ENCODE measurements at regions of chr3 and their contacts with region 1.

Region 1: GRCh38 chr3:194757647-194758061 is 72.0 kb downstream of the FAM43A start:
- DNase-seq: peak in 1 of 2 donors; percentile 62
- H3K4me3 ChIP-seq: no peak overlapping the region
- H3K27ac ChIP-seq: peak overlapping the region in 1 of 5 donors; percentile 68
- H3K4me1 ChIP-seq: peaks cover 6 to 24% (median 6%) of the 10 kb centered on the region in 4 donors
- H3K27me3 ChIP-seq: peaks cover 0 to 13% (median 0%) of the 10 kb centered on the region in 3 donors
- CTCF ChIP-seq: no peak
- EP300 ChIP-seq: no peak
- POLR2A ChIP-seq: no peak

Region 2: GRCh38 chr3:194691481-194692283 is 66.0 kb before region 1 on chr3:
- intact Hi-C with region 1: loop called (anchors 10 kb)
- DNase-seq: peak; percentile 14 to 41
- H3K4me3 ChIP-seq: no peak overlapping the region
- H3K27ac ChIP-seq: peak overlapping the region in 1 of 5 donors; percentile 34
- H3K4me1 ChIP-seq: peaks cover 23 to 38% (median 28%) of the 10 kb centered on the region in 4 donors
- H3K27me3 ChIP-seq: peaks cover 0 to 15% (median 7%) of the 10 kb centered on the region in 3 donors
- CTCF ChIP-seq: no peak
- EP300 ChIP-seq: no peak
- POLR2A ChIP-seq: no peak

Region 3: GRCh38 chr3:195001961-195002861 is 244.6 kb after region 1 on chr3:
- intact Hi-C with region 1: no loop called
- DNase-seq: peak; percentile 78 to 89
- H3K4me3 ChIP-seq: no peak overlapping the region
- H3K27ac ChIP-seq: no peak overlapping the region
- H3K4me1 ChIP-seq: peaks cover 9 to 22% (median 15%) of the 10 kb centered on the region in 4 donors
- H3K27me3 ChIP-seq: no peaks in the 10 kb centered on the region
- CTCF ChIP-seq: peak in 5 of 7 experiments; percentile 46 to 69 (median 53)
- EP300 ChIP-seq: no peak
- POLR2A ChIP-seq: no peak